ENCODE measurements at regions of chr2 and their contacts with region 1.

Region 1: GRCh38 chr2:85826990-85827878 is 61.6 kb downstream of the ST3GAL5 start:
- DNase-seq: peak; percentile 87
- H3K4me3 Mint-ChIP-seq: no peak overlapping the region
- H3K27ac Mint-ChIP-seq: no peak overlapping the region
- H3K4me1 Mint-ChIP-seq: peaks cover 33% of the 10 kb centered on the region
- H3K27me3 Mint-ChIP-seq: peaks cover 24% of the 10 kb centered on the region

Region 2: DNA sequence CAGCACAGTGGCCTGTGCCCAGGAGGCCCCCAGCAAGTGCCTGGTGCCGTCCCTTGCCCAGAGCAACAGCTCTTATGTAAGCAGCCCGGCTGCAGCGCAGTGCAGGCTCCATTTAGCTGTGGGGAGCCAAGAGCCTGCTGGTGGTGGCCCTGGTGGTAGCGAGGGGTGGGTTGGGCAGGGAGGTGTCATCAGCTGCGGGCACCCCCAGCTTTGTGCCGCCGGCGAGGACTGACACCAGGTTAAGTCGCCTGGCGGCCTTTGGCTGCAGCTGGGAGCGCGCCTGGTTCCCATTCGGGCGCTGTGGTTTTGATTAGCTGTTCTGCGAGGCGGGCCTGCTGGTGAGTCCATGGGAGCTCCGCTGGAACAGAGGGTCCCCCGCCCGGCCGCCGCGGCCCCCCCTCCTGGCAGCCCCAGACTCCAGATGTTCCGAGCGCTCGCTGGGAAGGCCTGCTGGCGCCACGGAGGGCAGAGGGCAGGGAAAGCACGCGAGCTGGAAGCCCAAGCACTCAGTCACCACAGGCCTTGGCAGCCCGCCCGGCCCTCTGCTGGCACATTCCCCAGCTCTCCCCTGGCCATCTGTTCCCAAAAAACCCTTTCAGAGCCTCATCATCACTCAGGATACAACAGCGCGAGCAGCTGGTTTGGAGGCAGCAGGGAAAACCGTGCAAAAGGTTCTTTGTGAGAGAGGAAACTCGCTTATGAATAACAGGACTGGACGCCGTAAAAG is 55.1 kb before region 1 on chr2:
- CTCF ChIA-PET with region 1: no interaction called
- POLR2A ChIA-PET with region 1: no interaction called
- DNase-seq: no peak
- H3K4me3 Mint-ChIP-seq: no peak overlapping the region
- H3K27ac Mint-ChIP-seq: no peak overlapping the region
- H3K4me1 Mint-ChIP-seq: peaks cover 3% of the 10 kb centered on the region
- H3K27me3 Mint-ChIP-seq: peaks cover 46% of the 10 kb centered on the region

Region 3: DNA sequence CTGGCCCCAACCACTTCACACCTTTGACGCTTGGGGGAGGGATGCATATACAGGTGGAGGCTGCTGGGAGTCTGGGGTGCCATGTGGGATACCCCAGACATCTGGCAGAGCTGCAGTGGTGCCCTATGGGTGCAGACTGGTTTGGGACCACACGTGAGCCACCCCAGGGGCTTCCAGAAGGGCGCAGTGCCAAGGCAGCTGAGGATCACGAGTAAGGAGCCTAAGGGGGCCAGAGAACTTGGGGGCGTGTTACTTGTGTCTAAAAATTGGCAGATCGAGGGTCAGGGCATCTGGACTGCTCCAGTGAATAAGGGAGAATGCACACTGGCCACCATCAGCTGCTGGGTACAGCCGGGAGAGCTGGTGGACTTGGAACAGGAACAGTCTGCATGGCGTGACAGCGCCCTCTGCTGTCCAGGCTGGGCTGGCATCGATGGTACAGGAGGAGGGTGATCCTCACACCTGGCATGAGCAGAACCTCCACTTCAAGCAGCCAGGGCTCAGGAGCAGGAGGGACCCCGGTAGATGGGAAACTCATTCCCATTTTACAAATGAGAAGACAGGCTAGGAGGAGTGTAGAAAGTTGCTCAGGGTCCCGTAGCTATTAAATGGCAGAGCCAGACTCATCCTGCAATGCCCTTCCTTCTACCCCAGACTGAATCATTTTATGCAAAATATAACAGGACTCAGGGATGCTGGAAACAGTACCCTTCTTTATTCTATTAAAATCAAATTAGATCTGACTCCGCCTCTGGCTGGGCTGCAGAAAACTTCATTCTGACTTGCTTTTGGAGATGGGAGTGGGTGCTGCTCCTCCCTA is 13.0 kb before region 1 on chr2:
- CTCF ChIA-PET with region 1: interaction called, 18 read pairs
- POLR2A ChIA-PET with region 1: no interaction called
- DNase-seq: peak; percentile 88
- H3K4me3 Mint-ChIP-seq: no peak overlapping the region
- H3K27ac Mint-ChIP-seq: no peak overlapping the region
- H3K4me1 Mint-ChIP-seq: no peaks in the 10 kb centered on the region
- H3K27me3 Mint-ChIP-seq: peaks cover 31% of the 10 kb centered on the region

Region 4: DNA sequence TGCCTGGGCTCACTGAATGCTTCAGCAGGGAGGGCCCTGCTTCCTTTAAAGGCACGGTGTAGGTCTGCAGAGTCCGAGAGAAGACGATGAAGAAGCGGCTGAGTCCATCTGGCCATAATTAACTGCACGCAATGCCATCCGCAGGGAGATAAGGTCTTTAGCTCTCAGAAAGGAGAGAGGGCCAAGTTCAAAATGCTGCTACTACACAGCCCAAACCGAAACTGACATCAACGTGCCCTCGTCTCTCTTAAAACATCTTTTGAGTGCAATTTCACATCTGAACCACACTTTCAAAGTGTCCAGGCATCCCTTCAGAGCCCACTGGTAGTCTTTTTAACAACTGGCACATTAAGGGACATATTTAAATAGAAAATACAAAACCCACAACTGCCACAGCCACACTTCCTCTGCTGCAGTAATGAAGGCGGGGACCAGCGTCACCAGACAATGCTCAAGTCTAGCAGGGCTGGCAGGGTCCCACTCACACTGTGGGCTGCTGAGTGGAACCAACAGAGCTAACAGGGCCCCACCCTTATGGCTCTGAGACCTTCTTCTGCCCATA is 25.8 kb after region 1 on chr2:
- CTCF ChIA-PET with region 1: interaction called, 20 read pairs
- POLR2A ChIA-PET with region 1: interaction called, 14 read pairs
- DNase-seq: peak; percentile 80
- H3K4me3 Mint-ChIP-seq: peak overlapping the region; percentile 84
- H3K27ac Mint-ChIP-seq: peak overlapping the region; percentile 100
- H3K4me1 Mint-ChIP-seq: peaks cover 70% of the 10 kb centered on the region
- H3K27me3 Mint-ChIP-seq: no peaks in the 10 kb centered on the region

Region 5: DNA sequence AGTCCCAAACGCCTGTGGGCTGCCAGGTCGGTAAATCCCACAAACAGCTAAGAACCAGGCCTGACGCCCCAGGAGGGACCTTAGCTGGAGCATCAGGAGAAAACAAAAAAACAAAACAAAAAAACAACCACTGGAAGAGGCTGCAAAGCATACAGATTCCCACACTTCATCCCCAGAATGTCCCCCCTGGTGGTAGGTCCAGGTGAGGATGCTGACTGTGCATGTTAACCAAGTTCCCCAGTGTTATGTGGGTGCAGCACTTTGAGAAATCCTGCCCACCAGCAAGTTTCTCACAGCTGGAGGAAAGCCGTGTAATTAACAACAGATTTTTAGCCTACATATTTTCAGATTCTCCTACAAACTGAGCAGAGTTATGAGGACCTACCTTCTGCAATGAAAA is 46.4 kb after region 1 on chr2:
- CTCF ChIA-PET with region 1: interaction called, 10 read pairs
- POLR2A ChIA-PET with region 1: no interaction called
- DNase-seq: no peak
- H3K4me3 Mint-ChIP-seq: no peak overlapping the region
- H3K27ac Mint-ChIP-seq: no peak overlapping the region
- H3K4me1 Mint-ChIP-seq: peaks cover 20% of the 10 kb centered on the region
- H3K27me3 Mint-ChIP-seq: peaks cover 2% of the 10 kb centered on the region

Region 6: GRCh38 chr2:86035883-86036668 is 208.8 kb after region 1 on chr2:
- CTCF ChIA-PET with region 1: interaction called, 71 read pairs
- POLR2A ChIA-PET with region 1: interaction called, 17 read pairs
- DNase-seq: peak; percentile 79
- H3K4me3 Mint-ChIP-seq: peak overlapping the region; percentile 54
- H3K27ac Mint-ChIP-seq: peak overlapping the region; percentile 99
- H3K4me1 Mint-ChIP-seq: peaks cover 71% of the 10 kb centered on the region
- H3K27me3 Mint-ChIP-seq: no peaks in the 10 kb centered on the region

Region 7: DNA sequence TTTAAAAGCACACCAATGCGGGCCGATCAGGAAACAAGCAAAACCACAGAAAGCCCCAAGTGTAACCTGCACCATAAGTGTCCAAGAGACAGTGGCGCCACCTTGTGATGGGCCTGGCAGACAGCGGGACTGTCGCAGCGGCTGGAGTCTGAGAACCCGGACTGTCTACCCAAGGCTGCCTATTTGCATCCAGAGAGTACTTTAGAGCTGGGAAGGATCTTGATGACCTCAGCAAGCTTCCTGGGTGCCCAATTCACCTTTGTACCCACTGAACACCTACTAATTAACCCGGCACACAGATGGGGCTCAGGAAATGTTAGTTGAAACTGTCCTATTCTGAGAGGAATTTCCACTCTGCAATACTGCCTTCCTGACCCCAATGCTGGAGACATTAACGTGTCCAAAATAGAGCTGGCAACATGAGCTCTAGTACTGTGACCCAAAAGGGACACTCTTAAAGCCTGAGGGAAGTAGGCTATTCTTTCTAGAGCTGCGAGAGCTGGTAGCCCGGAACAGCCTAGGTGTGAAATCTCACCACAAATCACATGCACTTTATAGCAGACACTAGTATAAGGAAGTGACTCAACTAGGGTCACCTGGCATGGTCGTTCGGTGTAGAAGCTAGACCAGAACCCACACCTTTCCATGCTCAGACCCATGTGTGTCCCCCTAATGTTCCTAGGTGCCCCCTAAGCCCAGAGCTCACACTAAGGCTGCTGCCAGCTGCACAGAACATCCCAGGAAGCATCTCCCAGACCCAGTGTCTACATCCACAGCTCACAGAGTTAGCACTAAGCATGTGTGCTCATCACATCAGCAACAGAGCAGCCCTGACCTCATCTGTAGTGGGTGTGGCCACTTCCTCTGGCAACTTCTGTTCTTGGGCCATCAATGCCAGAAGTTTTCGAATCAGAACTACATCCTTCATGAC is 253.0 kb after region 1 on chr2:
- CTCF ChIA-PET with region 1: interaction called, 383 read pairs
- POLR2A ChIA-PET with region 1: interaction called, 64 read pairs
- DNase-seq: peak; percentile 88
- H3K4me3 Mint-ChIP-seq: no peak overlapping the region
- H3K27ac Mint-ChIP-seq: peak overlapping the region; percentile 90
- H3K4me1 Mint-ChIP-seq: peaks cover 48% of the 10 kb centered on the region
- H3K27me3 Mint-ChIP-seq: no peaks in the 10 kb centered on the region